PC-9 (cell line): ENCODE measurements at regions of chr1 and their contacts with region 1.

Region 1: DNA sequence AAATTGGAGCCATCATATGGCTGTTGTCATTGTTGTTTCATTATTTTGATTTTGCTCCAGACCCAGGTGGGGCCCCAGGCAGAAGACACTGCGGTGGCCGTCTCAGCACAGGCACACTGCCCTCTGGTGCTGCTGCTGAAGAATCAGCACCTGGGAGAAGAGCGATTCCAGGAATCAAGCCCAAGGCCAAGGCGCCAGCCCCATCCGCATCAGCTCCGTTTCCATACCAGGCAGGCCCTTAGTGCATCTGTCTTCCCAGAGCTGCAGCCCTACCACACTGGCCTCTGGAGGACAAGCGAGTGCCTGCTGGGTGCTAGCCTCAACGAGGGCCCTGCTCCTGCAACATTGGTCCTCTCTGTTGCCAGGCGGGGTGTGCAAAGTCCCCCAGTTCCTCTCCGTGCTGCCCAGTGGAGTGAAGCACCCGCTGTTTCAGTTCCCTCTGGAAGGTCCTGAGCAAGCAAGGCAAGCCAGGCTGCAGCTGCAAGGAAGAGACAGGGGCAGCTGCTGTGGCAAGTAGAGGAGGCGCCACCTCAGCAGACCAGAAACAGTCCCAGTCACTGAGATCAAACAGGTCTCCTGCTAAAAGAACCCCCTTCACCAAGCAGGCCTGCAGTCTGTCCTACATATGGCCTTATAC is 5.2 kb downstream of the GRIK3 start:
- DNase-seq: no peak
- H3K4me3 ChIP-seq: no peak overlapping the region
- H3K27ac ChIP-seq: no peak overlapping the region
- H3K4me1 ChIP-seq: no peaks in the 10 kb centered on the region
- H3K27me3 ChIP-seq: peaks cover 36% of the 10 kb centered on the region
- CTCF ChIP-seq: no peak

Region 2: GRCh38 chr1:36199934-36200741 is 829.0 kb before region 1 on chr1:
- CTCF ChIA-PET with region 1: no interaction called
- POLR2A ChIA-PET with region 1: interaction called, 24 read pairs
- intact Hi-C with region 1: no loop called
- DNase-seq: peak; percentile 45 to 71
- H3K4me3 ChIP-seq: no peak overlapping the region
- H3K27ac ChIP-seq: no peak overlapping the region; the same call in 1 of the 2 replicates
- H3K4me1 ChIP-seq: peaks cover 35% of the 10 kb centered on the region
- H3K27me3 ChIP-seq: no peaks in the 10 kb centered on the region
- CTCF ChIP-seq: no peak

Region 3: GRCh38 chr1:36905941-36906340 is 123.2 kb before region 1 on chr1:
- CTCF ChIA-PET with region 1: no interaction called
- POLR2A ChIA-PET with region 1: no interaction called
- intact Hi-C with region 1: no loop called
- DNase-seq: no peak
- H3K4me3 ChIP-seq: no peak overlapping the region
- H3K27ac ChIP-seq: no peak overlapping the region
- H3K4me1 ChIP-seq: no peaks in the 10 kb centered on the region
- H3K27me3 ChIP-seq: peaks cover 32% of the 10 kb centered on the region
- CTCF ChIP-seq: no peak

Region 4: DNA sequence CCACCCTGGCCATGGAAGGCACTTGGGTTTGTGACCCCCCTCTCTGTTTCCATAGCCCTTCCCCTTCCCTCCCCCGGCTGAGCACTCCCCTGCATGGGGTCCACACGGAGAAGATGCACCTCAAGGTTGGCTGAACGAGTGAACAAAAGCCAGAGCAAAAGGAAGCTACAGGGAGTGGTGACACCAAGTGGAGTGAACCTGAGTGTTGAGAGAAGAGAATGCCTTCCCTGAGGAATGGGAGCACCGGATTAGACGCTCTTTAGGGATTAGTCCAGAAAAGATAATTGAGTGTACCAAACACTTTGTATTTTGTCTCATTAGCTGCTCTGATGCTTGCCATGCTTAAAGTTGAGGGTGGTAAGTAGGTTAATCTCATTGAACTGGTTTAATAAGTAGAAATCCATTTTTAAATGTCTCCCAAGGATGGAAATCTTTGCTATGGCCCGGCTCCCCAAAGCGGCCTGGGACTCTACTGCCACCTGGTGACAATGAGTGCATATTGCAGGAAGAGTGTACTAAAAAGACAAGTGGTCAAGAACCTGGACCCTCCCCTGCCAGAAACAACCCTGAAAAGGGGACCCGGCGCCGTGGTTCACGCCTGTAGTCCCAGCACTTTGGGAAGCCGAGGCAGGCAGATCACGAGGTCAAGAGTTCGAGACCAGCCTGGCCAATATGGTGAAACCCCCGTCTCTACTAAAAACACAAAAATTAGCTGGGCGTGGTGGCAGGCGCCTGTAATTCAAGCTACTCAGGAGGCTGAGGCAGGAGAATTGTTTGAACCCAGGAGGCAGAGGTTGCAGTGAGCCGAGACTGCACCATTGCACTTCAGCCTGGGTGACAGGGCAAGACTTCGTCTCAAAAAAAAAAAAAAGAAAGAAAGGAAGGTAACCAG is 294.6 kb after region 1 on chr1:
- CTCF ChIA-PET with region 1: no interaction called
- POLR2A ChIA-PET with region 1: no interaction called
- intact Hi-C with region 1: no loop called
- DNase-seq: peak in 1 of 2 experiments; percentile 6
- H3K4me3 ChIP-seq: no peak overlapping the region
- H3K27ac ChIP-seq: no peak overlapping the region
- H3K4me1 ChIP-seq: no peaks in the 10 kb centered on the region
- H3K27me3 ChIP-seq: peaks cover 42% of the 10 kb centered on the region
- CTCF ChIP-seq: peak; percentile 82